Sigmoid colon (tissue), 7 donors: ENCODE measurements at regions of chr17 and their contacts with region 1.

Region 1: GRCh38 chr17:72145981-72146380 is 25.2 kb downstream of the SOX9 start:
- DNase-seq: no peak
- H3K4me3 ChIP-seq: no peak overlapping the region
- H3K27ac ChIP-seq: no peak overlapping the region
- H3K4me1 ChIP-seq: no peaks in the 10 kb centered on the region
- H3K27me3 ChIP-seq: no peaks in the 10 kb centered on the region
- CTCF ChIP-seq: no peak
- EP300 ChIP-seq: no peak
- POLR2A ChIP-seq: no peak

Region 2: GRCh38 chr17:72205357-72205756 is 59.4 kb after region 1 on chr17:
- intact Hi-C with region 1: loop called (anchors 10 kb)
- DNase-seq: no peak
- H3K4me3 ChIP-seq: no peak overlapping the region
- H3K27ac ChIP-seq: no peak overlapping the region
- H3K4me1 ChIP-seq: no peaks in the 10 kb centered on the region
- H3K27me3 ChIP-seq: peaks cover 0 to 18% (median 0%) of the 10 kb centered on the region in 3 donors
- CTCF ChIP-seq: no peak
- EP300 ChIP-seq: no peak
- POLR2A ChIP-seq: no peak